Activated naive CD4-positive, alpha-beta T cell treated with anti-CD3 and anti-CD28 coated beads for 36 hours (primary cell): ENCODE measurements at regions of chr16 and their contacts with region 1.

Region 1: GRCh38 chr16:68843482-68844210 is at the start of gene TANGO6:
- DNase-seq: peak; percentile 95
- H3K4me3 Mint-ChIP-seq: peak within 1 kb of the TSS; percentile 96
- H3K27ac Mint-ChIP-seq: peak within 1 kb of the TSS; percentile 89
- H3K4me1 Mint-ChIP-seq: peaks cover 27% of the 10 kb centered on the region
- H3K27me3 Mint-ChIP-seq: no peaks in the 10 kb centered on the region
- total RNA-seq, gene TANGO6: 21.6 to 22.3 TPM

Region 2: GRCh38 chr16:68590201-68590994 is 253.2 kb before region 1 on chr16:
- CTCF ChIA-PET with region 1: interaction called, 11 read pairs
- intact Hi-C with region 1: loop called (anchors 2 kb)
- DNase-seq: peak; percentile 83
- H3K4me3 Mint-ChIP-seq: peak overlapping the region; percentile 17
- H3K27ac Mint-ChIP-seq: peak overlapping the region; percentile 52
- H3K4me1 Mint-ChIP-seq: peaks cover 4% of the 10 kb centered on the region
- H3K27me3 Mint-ChIP-seq: no peaks in the 10 kb centered on the region

Region 3: DNA sequence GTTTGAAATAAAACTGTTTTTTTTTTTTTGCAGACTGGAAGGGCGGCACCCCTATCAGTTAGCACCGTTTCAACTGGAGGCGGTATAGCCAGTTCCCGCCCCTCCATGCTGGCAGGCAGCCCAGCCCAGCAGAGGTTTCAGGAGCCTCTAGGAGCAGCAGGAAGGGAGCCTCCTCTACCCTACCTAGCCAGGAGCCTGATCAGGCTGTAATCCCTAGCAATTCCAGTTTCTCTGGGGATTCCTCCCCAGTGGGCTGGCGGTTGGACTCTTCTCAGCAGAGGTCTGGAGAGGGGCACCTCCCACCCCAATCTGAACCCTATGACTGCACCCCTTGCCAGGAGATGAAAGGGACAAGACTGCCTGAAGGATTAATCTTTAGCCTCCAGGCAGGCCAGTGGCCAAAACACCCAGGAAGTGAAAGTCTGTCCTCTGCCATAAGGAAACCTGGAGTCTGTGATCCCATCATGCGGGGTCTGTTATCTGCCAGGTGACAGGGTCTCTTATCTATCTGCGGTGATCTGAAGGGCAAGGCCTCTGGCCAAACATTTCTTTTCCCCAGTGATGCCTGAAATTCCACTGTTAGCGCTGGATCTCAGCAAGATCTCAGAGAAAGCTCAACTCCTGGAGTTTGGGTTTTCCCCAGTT is 111.5 kb before region 1 on chr16:
- CTCF ChIA-PET with region 1: no interaction called
- intact Hi-C with region 1: no loop called
- DNase-seq: no peak
- H3K4me3 Mint-ChIP-seq: no peak overlapping the region
- H3K27ac Mint-ChIP-seq: no peak overlapping the region
- H3K4me1 Mint-ChIP-seq: peaks cover 3% of the 10 kb centered on the region
- H3K27me3 Mint-ChIP-seq: peaks cover 32% of the 10 kb centered on the region

Region 4: DNA sequence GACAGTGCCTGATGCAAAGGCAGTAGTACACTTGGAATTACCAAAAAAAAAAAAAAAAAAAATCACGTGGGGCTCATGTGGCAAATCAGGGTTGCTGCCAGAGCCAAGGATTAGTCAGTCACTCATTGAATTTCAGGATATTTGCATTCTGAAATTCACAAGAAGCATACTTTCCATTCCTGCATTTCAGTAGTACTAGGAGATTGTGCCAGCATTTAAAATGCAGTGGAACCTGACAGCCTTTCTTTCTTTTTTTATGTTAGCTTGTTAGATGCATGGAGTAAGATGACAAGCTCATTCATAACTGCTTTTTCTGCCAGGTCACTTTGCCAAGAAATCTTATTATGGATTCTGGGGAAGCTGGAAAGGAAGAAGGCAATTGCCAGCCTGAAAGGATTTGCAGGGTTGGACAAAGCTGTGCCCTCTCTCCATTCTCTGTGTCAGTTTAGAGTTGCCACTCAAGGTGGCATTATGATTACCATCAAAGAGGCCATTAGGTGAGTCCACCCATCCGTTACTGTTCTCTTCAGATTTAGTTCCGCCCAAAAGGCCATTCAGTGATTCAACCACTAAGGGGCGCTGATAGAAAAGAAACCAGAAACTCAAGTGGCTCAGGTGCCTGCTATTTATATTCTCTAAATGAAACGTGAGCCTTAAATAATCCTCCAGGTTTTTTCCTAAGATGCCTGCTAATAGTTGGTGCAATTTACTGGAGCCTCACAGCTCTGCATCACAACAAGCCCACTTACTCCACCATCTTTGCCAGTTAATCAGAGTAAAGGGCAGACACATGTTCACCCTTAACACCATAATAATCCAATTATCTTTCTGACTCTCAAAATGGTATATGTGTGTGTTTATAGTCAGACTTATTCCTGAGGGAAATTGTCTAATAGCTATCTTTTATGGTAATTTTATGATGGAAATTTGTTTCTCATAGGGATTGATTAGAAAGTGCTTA is 58.6 kb after region 1 on chr16:
- CTCF ChIA-PET with region 1: no interaction called
- intact Hi-C with region 1: no loop called
- DNase-seq: peak; percentile 35
- H3K4me3 Mint-ChIP-seq: no peak overlapping the region
- H3K27ac Mint-ChIP-seq: no peak overlapping the region
- H3K4me1 Mint-ChIP-seq: no peaks in the 10 kb centered on the region
- H3K27me3 Mint-ChIP-seq: no peaks in the 10 kb centered on the region

Region 5: DNA sequence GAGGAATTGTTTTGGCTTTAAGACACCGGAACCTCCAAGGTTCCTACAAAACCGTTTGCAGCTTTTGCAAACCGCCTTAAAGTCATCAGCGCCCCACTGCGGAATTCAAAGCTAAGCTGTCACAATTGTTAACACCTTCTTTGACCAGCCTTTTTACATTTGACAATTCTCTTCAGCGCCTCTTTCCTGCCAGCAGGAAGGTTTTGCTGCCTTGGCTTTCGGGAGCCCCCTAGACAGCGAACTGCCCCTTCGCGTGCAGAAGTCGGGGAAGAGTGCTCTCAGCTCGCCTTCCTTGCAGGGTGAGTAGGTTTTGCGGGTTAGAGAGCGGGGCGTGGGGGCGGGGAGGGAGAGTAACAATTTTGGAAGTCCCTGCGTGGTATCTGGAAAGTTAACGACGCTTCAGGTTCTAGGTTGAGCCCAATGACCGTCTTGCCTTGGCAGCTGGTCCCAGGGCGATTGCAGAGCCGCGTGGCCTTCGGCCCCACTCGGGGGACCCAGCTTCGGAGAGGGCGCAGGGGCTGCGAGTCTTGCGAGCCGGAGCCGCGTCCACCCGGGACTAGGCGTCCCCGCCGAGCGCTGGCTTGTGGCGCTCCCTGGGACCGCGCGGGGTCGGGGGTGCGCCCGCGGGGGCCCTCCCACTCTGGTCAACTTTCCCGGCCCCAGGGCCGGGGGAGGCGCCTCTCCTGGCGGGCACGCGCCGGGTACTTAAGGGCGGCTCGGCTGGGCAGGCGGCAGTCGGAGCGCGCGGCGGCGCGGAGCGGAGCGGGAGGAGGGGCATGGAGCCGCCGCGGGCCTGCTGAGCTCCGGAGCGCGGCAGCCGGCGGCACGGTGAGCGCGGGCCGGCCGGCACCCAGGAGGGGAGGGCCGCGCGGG is 262.1 kb after region 1 on chr16 and contains the start of gene HAS3:
- CTCF ChIA-PET with region 1: no interaction called
- intact Hi-C with region 1: loop called (anchors 1 kb)
- DNase-seq: peak; percentile 60
- H3K4me3 Mint-ChIP-seq: peak within 1 kb of the TSS; percentile 79
- H3K27ac Mint-ChIP-seq: peak within 1 kb of the TSS; percentile 26
- H3K4me1 Mint-ChIP-seq: peaks cover 21% of the 10 kb centered on the region
- H3K27me3 Mint-ChIP-seq: peaks cover 26% of the 10 kb centered on the region
- total RNA-seq, gene HAS3: 0.20 to 0.31 TPM

Region 6: GRCh38 chr16:69132424-69133252 is 289.0 kb after region 1 on chr16 and contains the starts of genes CHTF8 and UTP4:
- CTCF ChIA-PET with region 1: no interaction called
- intact Hi-C with region 1: loop called (anchors 2 kb)
- DNase-seq: peak; percentile 89
- H3K4me3 Mint-ChIP-seq: peak within 1 kb of the TSS; percentile 96
- H3K27ac Mint-ChIP-seq: peak within 1 kb of the TSS; percentile 90
- H3K4me1 Mint-ChIP-seq: peaks cover 59% of the 10 kb centered on the region
- H3K27me3 Mint-ChIP-seq: no peaks in the 10 kb centered on the region
- total RNA-seq, gene CHTF8: 114 to 117 TPM
- total RNA-seq, gene UTP4: 62.6 to 69.8 TPM

Region 7: GRCh38 chr16:69209735-69210134 is 366.1 kb after region 1 on chr16:
- CTCF ChIA-PET with region 1: no interaction called
- intact Hi-C with region 1: no loop called
- DNase-seq: no peak
- H3K4me3 Mint-ChIP-seq: no peak overlapping the region
- H3K27ac Mint-ChIP-seq: no peak overlapping the region
- H3K4me1 Mint-ChIP-seq: peaks cover 7% of the 10 kb centered on the region
- H3K27me3 Mint-ChIP-seq: no peaks in the 10 kb centered on the region

Region 8: DNA sequence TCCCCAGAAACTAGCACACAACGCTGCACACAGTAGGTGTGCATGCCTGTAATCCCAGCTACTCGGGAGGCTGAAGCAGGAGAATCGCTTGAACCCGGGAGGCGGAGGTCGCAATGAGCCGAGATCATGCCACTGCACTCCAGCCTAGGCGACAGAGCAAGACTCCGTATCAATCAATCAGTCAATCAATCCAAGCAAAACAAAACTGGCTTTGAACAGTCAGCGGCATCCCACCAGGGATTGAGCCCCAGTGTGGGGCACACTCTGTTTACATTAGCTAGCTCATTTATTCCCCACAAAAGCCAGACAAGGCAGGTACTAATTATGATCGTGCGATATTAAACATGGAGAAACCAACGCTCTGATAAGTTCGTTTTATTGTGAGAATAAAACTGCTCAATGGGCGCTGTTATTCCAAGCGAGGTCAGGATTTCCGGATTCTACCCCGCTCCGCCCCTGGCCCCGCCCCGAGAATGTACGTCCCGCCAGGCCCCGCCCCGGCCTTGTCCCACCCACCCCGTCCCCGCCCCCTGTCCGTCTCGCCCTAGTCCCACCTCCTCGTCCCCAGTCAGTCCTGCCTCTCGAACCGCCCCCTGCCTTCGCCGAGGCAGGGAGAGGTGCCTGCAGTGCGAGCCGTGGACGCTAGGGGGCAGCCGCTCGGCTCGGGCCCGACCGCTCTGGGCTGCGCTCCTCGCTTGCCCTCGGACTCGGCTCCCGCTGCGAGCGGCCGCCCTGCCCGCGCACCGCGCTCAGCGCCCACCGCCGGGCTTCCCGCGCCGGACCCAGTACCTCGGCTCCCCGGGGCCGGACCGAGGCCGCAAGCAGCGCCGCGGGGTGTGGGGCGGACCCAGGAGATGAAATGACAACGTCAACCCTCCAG is 467.2 kb after region 1 on chr16 and contains the start of gene VPS4A:
- CTCF ChIA-PET with region 1: no interaction called
- intact Hi-C with region 1: loop called (anchors 1 kb)
- DNase-seq: peak; percentile 98
- H3K4me3 Mint-ChIP-seq: peak within 1 kb of the TSS; percentile 94
- H3K27ac Mint-ChIP-seq: peak within 1 kb of the TSS; percentile 84
- H3K4me1 Mint-ChIP-seq: peaks cover 31% of the 10 kb centered on the region
- H3K27me3 Mint-ChIP-seq: no peaks in the 10 kb centered on the region
- total RNA-seq, gene VPS4A: 34.3 to 35.8 TPM